Heart left ventricle (tissue), 16 donors: ENCODE measurements at regions of chr7 and their contacts with region 1.

Region 1: GRCh38 chr7:124765401-124766352 is at the start of gene GPR37:
- DNase-seq: peak in 4 of 5 donors; percentile 7 to 63 (median 26)
- ATAC-seq: peak in 3 of 4 donors; percentile 50 to 90 (median 89)
- H3K4me3 ChIP-seq: peak within 1 kb of the TSS; percentile 11 to 58 (median 46)
- H3K27ac ChIP-seq: no peak within 1 kb of the TSS
- H3K4me1 ChIP-seq: peaks cover 0 to 24% (median 5%) of the 10 kb centered on the region in 12 donors
- H3K27me3 ChIP-seq: peaks cover 20 to 49% (median 38%) of the 10 kb centered on the region in 9 donors
- CTCF ChIP-seq: peak in 1 of 12 donors; percentile 10
- POLR2A ChIP-seq: no peak
- total RNA-seq, gene GPR37: 0.25 to 0.48 TPM in 2 of 9 donors, not detected in the others

Region 2: GRCh38 chr7:124179641-124180040 is 586.0 kb before region 1 on chr7:
- intact Hi-C with region 1: loop called in 1 of 10 experiments (anchors 5 kb)
- DNase-seq: no peak
- ATAC-seq: peak in 2 of 4 donors; percentile 41 to 57
- H3K4me3 ChIP-seq: no peak overlapping the region
- H3K27ac ChIP-seq: no peak overlapping the region
- H3K4me1 ChIP-seq: no peaks in the 10 kb centered on the region
- H3K27me3 ChIP-seq: no peaks in the 10 kb centered on the region
- CTCF ChIP-seq: peak in 1 of 12 donors; percentile 28
- POLR2A ChIP-seq: no peak

Region 3: DNA sequence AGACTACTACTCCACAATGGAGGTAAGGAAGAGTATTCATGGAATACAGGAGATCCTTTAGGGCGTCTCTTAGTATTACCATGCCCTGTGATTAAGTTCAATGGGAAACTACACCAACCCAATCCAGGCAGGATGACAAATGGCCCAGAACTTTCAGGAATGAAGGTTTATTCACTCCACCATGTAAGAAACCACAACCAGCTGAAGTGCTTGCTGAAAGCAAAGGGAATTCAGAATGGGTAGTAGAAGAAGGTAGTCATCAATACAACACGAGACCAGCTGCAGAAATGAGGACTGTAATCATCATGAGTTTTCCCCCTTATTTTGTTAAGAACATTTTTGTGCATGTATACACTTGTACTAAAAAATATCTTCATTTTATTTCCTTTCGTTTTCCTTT is 76.7 kb before region 1 on chr7:
- intact Hi-C with region 1: no loop called
- DNase-seq: no peak
- ATAC-seq: no peak
- H3K4me3 ChIP-seq: no peak overlapping the region
- H3K27ac ChIP-seq: no peak overlapping the region
- H3K4me1 ChIP-seq: no peaks in the 10 kb centered on the region
- H3K27me3 ChIP-seq: no peaks in the 10 kb centered on the region
- CTCF ChIP-seq: no peak
- POLR2A ChIP-seq: no peak